ENCODE measurements at regions of chr15 and their contacts with region 1.

Region 1: DNA sequence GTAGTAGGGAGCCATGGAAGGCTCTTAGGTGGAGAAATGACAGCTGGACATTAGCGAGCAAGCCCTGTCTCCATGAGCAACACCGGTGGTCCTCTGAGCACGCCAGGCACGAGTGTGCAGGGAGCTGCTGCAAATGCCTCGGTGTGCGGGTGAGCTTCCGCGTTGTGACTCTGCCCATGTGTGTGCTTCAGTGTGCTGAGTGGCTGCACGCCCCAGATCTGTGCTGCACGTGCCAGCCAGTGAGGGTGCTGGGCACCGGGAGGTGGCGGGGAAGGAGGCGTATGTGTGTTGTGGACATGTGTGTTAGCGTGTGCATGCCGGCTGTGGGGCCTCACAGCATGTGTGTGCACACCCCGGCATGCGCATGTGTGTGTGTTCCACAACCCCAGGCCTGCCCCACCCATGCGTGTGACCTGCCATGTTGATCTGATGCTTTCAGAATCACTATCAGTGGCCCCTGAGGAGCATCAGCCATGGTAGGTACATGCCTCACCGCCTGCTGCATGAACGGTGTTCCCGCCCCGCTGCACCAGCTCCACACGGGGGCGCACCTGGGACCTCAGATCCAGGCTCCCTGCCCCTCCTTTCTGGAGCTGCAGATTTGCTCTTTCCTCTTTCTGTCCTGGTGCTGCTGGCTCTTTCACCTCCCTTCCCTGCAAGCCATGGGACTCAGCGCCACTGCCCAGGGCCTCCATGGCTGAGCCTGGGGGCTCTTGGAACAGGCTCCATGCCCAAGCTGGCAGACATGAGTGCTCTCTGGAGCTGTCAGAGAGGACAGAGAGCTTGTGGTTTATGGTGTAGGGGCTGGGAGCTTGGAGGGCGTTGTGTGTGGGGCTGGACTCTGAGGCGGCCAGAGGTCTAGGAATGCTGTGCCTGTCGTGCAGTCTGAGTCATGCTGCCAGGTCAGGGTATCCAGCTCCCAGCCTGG is 169.4 kb downstream of the TBC1D2B start:
- DNase-seq: no peak
- H3K4me3 Mint-ChIP-seq: no peak overlapping the region
- H3K27ac Mint-ChIP-seq: no peak overlapping the region
- H3K4me1 Mint-ChIP-seq: peaks cover 11% of the 10 kb centered on the region
- H3K27me3 Mint-ChIP-seq: peaks cover under 1% of the 10 kb centered on the region

Region 2: GRCh38 chr15:77688693-77689092 is 219.4 kb before region 1 on chr15:
- intact Hi-C with region 1: no loop called
- DNase-seq: no peak
- H3K4me3 Mint-ChIP-seq: no peak overlapping the region
- H3K27ac Mint-ChIP-seq: no peak overlapping the region
- H3K4me1 Mint-ChIP-seq: no peaks in the 10 kb centered on the region
- H3K27me3 Mint-ChIP-seq: peaks cover 3% of the 10 kb centered on the region

Region 3: GRCh38 chr15:78195735-78196201 is 287.7 kb after region 1 on chr15:
- intact Hi-C with region 1: loop called (anchors 2 kb)
- DNase-seq: peak; percentile 26
- H3K4me3 Mint-ChIP-seq: no peak overlapping the region
- H3K27ac Mint-ChIP-seq: no peak overlapping the region
- H3K4me1 Mint-ChIP-seq: no peaks in the 10 kb centered on the region
- H3K27me3 Mint-ChIP-seq: peaks cover 14% of the 10 kb centered on the region

Region 4: GRCh38 chr15:78241007-78241406 is 332.9 kb after region 1 on chr15:
- intact Hi-C with region 1: loop called (anchors 1 kb)
- DNase-seq: peak; percentile 70
- H3K4me3 Mint-ChIP-seq: no peak overlapping the region
- H3K27ac Mint-ChIP-seq: no peak overlapping the region
- H3K4me1 Mint-ChIP-seq: no peaks in the 10 kb centered on the region
- H3K27me3 Mint-ChIP-seq: peaks cover 16% of the 10 kb centered on the region

Region 5: DNA sequence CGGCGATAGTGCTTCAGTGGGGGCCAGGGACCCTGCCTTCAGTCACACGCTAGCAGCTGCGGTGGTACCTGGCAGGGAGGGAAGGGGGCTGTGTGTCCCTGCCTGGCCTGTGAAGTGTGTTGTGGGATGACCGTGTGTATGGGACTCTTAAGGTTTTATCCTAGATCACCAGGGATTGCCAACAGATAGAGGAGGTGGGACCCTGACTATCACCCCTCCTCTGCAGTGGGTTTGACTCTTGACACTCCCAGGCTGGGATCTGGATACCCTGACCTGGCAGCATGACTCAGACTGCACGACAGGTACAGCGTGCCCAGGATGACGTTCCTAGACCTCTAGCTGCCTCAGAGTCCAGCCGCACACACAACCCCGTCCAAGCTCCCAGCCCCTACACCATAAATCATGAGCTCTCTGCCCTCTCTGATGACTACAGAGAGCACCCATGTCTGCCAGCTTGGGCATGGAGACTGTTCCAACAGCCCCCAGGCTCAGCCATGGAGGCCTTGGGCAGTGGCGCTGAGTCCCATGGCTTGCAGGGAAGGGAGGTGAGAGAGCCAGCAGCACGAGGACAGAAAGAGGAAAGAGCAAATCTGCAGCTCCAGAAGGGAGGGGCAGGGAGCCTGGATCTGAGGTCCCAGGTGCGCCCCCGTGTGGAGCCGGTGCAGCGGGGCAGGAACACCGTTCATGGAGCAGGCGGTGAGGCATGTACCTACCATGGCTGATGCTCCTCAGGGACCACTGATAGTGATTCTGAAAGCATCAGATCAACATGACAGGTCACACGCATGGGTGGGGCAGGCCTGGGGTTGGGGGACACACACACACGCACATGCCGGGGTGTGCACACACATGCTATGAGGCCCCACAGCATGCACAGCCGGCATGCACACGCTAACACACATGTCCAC is 832.2 kb after region 1 on chr15:
- intact Hi-C with region 1: loop called (anchors 5 kb)
- DNase-seq: peak; percentile 58
- H3K4me3 Mint-ChIP-seq: no peak overlapping the region
- H3K27ac Mint-ChIP-seq: no peak overlapping the region
- H3K4me1 Mint-ChIP-seq: no peaks in the 10 kb centered on the region
- H3K27me3 Mint-ChIP-seq: peaks cover 9% of the 10 kb centered on the region

Measured in activated T-helper 1 cell treated with anti-CD3 and anti-CD28 coated beads, Interleukin-12 subunit alpha, Interleukin-12 subunit beta, Interleukin-2, Interleukin-4 antibody, amounts not matched to agents 30 ng/mL and 10 ng/mL and 1 ng/mL, durations not matched to agents 14 hours and 24 hours and 36 hours (primary cell).